ENCODE measurements at regions of chr22 and their contacts with region 1.

Region 1: GRCh38 chr22:30289134-30289979 is at the start of gene CASTOR1:
- DNase-seq: peak; percentile 93 to 100 (median 98)

Region 2: GRCh38 chr22:30183861-30184278 is 105.5 kb before region 1 on chr22:
- intact Hi-C with region 1: no loop called
- DNase-seq: no peak

Region 3: DNA sequence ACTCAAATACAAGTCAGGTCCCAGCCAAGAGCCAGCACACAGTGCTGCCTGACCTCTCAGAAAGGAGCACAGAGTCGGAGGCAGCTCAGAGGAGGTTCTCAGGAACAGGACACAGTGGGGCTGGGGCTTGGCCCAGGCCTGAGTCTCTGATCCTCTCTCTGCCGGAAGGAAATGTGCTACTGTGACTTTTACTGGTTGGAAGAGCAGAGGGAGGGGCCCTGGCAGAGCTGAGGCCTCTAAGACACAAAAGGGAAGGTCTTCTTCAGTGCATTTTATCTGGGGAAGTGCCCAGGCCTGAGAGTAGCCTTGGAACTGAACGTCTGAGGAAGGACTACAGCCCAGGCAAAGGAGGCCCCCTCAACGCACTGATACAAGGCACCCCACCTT is 16.2 kb after region 1 on chr22:
- intact Hi-C with region 1: no loop called
- DNase-seq: peak in 1 of 10 donors; percentile 82

Region 4: GRCh38 chr22:30326706-30327362 is 37.5 kb after region 1 on chr22 and contains the start of gene TBC1D10A:
- intact Hi-C with region 1: loop called (anchors 2 kb)
- DNase-seq: peak; percentile 43 to 97 (median 80)